ENCODE measurements at regions of chr2 and their contacts with region 1.

Region 1: GRCh38 chr2:70132244-70133126 is 45.2 kb downstream of the PCBP1 start:
- DNase-seq: peak in 6 of 9 experiments; percentile 48 to 78 (median 60)
- ATAC-seq: peak; percentile 53
- H3K4me3 ChIP-seq: peak overlapping the region; percentile 29 to 49
- H3K4me3 Mint-ChIP-seq: peak overlapping the region; percentile 91
- H3K27ac ChIP-seq: peak overlapping the region; percentile 62 to 90
- H3K27ac Mint-ChIP-seq: peak overlapping the region; percentile 98
- H3K4me1 ChIP-seq: peaks cover 74% of the 10 kb centered on the region
- H3K4me1 Mint-ChIP-seq: peaks cover 75% of the 10 kb centered on the region
- H3K27me3 ChIP-seq: no peaks in the 10 kb centered on the region
- H3K27me3 Mint-ChIP-seq: no peaks in the 10 kb centered on the region
- CTCF ChIP-seq: no peak

Region 2: DNA sequence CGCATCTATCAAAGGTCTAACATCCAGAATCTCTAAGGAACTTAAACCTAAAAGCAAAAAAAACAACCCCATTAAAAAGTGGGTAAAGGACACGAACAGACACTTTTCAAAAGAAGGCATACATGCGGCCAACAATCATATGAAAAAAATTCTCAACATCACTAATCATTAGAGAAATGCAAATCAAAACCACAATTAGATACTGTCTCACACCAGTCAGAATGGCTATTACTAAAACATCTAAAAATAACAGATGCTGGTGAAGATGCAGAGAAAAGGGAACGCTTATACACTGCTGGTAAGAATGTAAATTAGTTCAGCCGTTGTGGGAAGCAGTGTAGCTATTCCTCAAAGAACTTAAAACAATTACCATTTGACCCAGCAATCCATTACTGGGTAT is 1918.1 kb before region 1 on chr2:
- CTCF ChIA-PET with region 1: no interaction called
- POLR2A ChIA-PET with region 1: no interaction called
- intact Hi-C with region 1: no loop called
- DNase-seq: no peak
- ATAC-seq: no peak
- H3K4me3 ChIP-seq: no peak overlapping the region
- H3K4me3 Mint-ChIP-seq: no peak overlapping the region
- H3K27ac ChIP-seq: no peak overlapping the region
- H3K27ac Mint-ChIP-seq: peak overlapping the region; percentile 15
- H3K4me1 ChIP-seq: peaks cover 34% of the 10 kb centered on the region
- H3K4me1 Mint-ChIP-seq: peaks cover 82% of the 10 kb centered on the region
- H3K27me3 ChIP-seq: no peaks in the 10 kb centered on the region
- H3K27me3 Mint-ChIP-seq: no peaks in the 10 kb centered on the region
- CTCF ChIP-seq: no peak

Region 3: GRCh38 chr2:70115646-70116442 is 16.6 kb before region 1 on chr2:
- CTCF ChIA-PET with region 1: interaction called, 5 read pairs
- POLR2A ChIA-PET with region 1: interaction called, 183 read pairs
- intact Hi-C with region 1: no loop called
- DNase-seq: peak in 1 of 9 experiments; percentile 36
- ATAC-seq: peak; percentile 35
- H3K4me3 ChIP-seq: no peak overlapping the region
- H3K4me3 Mint-ChIP-seq: peak overlapping the region; percentile 26
- H3K27ac ChIP-seq: peak overlapping the region in 1 of 2 experiments; percentile 23
- H3K27ac Mint-ChIP-seq: peak overlapping the region; percentile 69
- H3K4me1 ChIP-seq: peaks cover 44% of the 10 kb centered on the region
- H3K4me1 Mint-ChIP-seq: peaks cover 54% of the 10 kb centered on the region
- H3K27me3 ChIP-seq: no peaks in the 10 kb centered on the region
- H3K27me3 Mint-ChIP-seq: no peaks in the 10 kb centered on the region
- CTCF ChIP-seq: no peak